HCT116 (cell line): ENCODE measurements at regions of chr2 and their contacts with region 1.

Region 1: GRCh38 chr2:61538200-61538919 is at the start of gene XPO1:
- DNase-seq: peak; percentile 98
- ATAC-seq: peak; percentile 86
- H3K4me3 ChIP-seq: peak within 1 kb of the TSS; percentile 58 to 94
- H3K27ac ChIP-seq: peak within 1 kb of the TSS; percentile 94
- H3K4me1 ChIP-seq: peaks cover 17 to 27% of the 10 kb centered on the region in 2 experiments
- H3K27me3 ChIP-seq: no peaks in the 10 kb centered on the region
- CTCF ChIP-seq: no peak
- POLR2A ChIP-seq: peak; percentile 89
- RAD21 ChIP-seq: no peak
- total RNA-seq, gene XPO1: 184 TPM

Region 2: GRCh38 chr2:60341151-60341550 is 1197.2 kb before region 1 on chr2:
- CTCF ChIA-PET with region 1: no interaction called
- POLR2A ChIA-PET with region 1: no interaction called
- RAD21 ChIA-PET with region 1: no interaction called
- intact Hi-C with region 1: no loop called
- DNase-seq: no peak
- ATAC-seq: no peak
- H3K4me3 ChIP-seq: no peak overlapping the region
- H3K27ac ChIP-seq: no peak overlapping the region
- H3K4me1 ChIP-seq: no peaks in the 10 kb centered on the region
- H3K27me3 ChIP-seq: peaks cover 6% of the 10 kb centered on the region; the same call in 1 of the 2 replicates
- CTCF ChIP-seq: no peak
- POLR2A ChIP-seq: no peak
- RAD21 ChIP-seq: no peak

Region 3: DNA sequence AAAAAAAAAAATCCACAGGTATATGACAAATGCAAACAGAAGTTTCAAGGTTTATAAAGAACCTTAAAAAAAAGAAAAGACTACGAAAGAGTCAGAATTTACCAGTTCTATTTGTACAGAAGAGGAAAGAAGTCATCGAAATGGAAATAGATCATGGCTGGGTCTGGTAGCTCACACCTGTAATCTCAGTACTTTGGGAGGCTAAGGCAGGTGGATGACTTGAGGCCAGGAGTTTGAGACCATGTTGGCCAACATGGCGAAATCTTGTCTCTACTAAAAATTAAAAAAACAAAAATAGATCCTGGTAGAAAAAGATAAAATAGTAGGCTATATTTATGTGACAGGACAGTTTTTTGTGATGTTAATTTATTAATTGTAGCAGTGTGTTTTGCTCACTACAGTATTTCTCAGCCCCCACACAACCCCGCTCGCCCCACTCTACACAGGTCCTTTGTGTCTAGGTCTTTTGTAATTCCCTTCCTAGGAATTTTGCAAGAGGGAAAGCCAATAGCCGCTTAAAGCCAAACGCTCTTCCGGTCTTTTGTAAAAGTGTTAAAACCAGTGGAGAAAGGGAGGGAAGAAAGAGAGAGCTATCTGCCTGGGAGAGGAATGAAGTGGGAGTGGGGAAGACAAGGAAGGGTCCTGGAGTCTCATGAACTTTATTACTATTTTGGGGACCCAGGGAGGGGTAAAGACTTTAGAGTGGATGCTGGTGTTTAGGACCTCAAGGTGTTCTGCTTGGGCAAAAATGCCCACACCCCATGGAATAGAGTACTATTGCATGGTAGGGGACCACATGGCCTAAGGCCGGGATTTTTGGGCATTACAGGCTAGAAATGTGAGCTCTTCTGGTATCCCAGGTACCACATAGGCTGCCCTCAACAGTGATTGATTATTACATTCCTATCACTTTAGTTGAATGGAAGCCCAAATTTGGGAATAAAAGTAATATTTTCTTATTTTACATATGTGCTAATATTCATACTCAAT is 59.2 kb after region 1 on chr2:
- CTCF ChIA-PET with region 1: no interaction called
- POLR2A ChIA-PET with region 1: no interaction called
- RAD21 ChIA-PET with region 1: no interaction called
- intact Hi-C with region 1: loop called (anchors 2 kb)
- DNase-seq: no peak
- ATAC-seq: no peak; the same call in 1 of the 2 replicates
- H3K4me3 ChIP-seq: no peak overlapping the region
- H3K27ac ChIP-seq: peak overlapping the region; percentile 49
- H3K4me1 ChIP-seq: peaks cover 8 to 22% of the 10 kb centered on the region in 2 experiments; a peak in 3 of 4 replicates
- H3K27me3 ChIP-seq: no peaks in the 10 kb centered on the region
- CTCF ChIP-seq: no peak
- POLR2A ChIP-seq: no peak
- RAD21 ChIP-seq: no peak

Region 4: GRCh38 chr2:61764035-61764800 is 225.9 kb after region 1 on chr2:
- CTCF ChIA-PET with region 1: no interaction called
- POLR2A ChIA-PET with region 1: no interaction called
- RAD21 ChIA-PET with region 1: no interaction called
- intact Hi-C with region 1: loop called (anchors 5 kb)
- DNase-seq: peak; percentile 97
- ATAC-seq: peak; percentile 95
- H3K4me3 ChIP-seq: peak overlapping the region; percentile 73 to 74
- H3K27ac ChIP-seq: peak overlapping the region; percentile 94
- H3K4me1 ChIP-seq: peaks cover 10 to 37% of the 10 kb centered on the region in 2 experiments
- H3K27me3 ChIP-seq: no peaks in the 10 kb centered on the region
- CTCF ChIP-seq: no peak
- POLR2A ChIP-seq: peak; percentile 86
- RAD21 ChIP-seq: no peak; the same call in 1 of the 2 replicates